Activated B cell treated with CpG ODN at 0.5 μM for 24 hours (primary cell): ENCODE measurements at regions of chr15 and their contacts with region 1.

Region 1: DNA sequence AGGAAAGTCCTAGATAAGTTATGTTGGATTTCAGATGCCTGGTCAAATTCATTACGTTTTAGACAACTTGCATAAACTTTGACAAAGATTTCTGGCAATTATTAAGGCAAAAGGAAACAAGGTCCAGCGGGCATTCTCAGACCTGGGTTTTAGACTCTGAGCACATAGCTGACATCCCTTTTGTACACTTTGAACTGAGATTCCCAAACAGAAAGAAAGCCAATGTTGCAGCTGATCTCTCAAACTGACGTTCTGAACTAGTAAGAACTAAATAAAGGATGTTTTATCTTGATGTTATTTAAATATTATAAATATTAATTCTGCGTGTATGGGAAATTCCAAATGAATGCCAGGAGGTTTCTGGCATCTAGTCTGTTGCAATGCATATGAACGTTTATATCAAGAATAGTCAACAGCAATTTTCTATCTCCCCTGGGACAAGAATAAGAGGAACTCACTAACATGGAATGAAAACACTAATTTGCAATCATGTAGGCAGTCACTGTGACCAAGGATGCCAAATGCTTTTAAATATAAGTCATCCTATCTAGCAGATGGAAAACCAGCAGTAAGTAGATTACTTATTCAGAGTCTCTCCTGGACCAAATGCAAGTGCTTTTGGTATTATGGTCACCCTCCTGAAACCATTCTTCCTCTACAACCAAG is 202.1 kb downstream of the GREM1 start:
- DNase-seq: no peak
- ATAC-seq: no peak
- H3K4me3 Mint-ChIP-seq: no peak overlapping the region
- H3K27ac Mint-ChIP-seq: no peak overlapping the region
- H3K4me1 Mint-ChIP-seq: peaks cover 21% of the 10 kb centered on the region
- H3K27me3 Mint-ChIP-seq: peaks cover 1% of the 10 kb centered on the region
- CTCF ChIP-seq: no peak

Region 2: DNA sequence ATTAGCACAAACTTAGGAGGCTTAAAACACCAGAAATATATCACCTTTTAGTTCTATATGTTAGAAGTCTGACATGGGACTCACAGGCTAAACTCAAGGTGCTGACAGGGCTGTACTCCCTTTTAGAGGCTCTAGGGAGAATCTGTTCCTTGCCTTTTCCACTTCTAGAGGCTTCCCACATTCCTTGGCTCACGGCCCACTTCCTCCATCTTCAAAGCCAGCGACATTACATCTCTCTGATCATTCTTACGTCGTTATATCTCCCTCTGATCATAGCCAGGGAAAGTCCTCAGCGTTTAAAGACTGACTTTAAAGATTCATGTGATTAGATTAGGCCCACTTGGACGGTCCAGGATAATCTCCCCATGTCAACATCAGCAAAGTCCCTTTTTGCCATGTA is 35.7 kb before region 1 on chr15:
- CTCF ChIA-PET with region 1: no interaction called
- POLR2A ChIA-PET with region 1: no interaction called
- intact Hi-C with region 1: loop called (anchors 5 kb)
- DNase-seq: no peak
- ATAC-seq: no peak
- H3K4me3 Mint-ChIP-seq: no peak overlapping the region
- H3K27ac Mint-ChIP-seq: no peak overlapping the region
- H3K4me1 Mint-ChIP-seq: no peaks in the 10 kb centered on the region
- H3K27me3 Mint-ChIP-seq: no peaks in the 10 kb centered on the region
- CTCF ChIP-seq: no peak

Region 3: GRCh38 chr15:33729653-33730052 is 809.8 kb after region 1 on chr15:
- CTCF ChIA-PET with region 1: no interaction called
- POLR2A ChIA-PET with region 1: no interaction called
- intact Hi-C with region 1: no loop called
- DNase-seq: no peak
- ATAC-seq: no peak
- H3K4me3 Mint-ChIP-seq: no peak overlapping the region
- H3K27ac Mint-ChIP-seq: no peak overlapping the region
- H3K4me1 Mint-ChIP-seq: no peaks in the 10 kb centered on the region
- H3K27me3 Mint-ChIP-seq: no peaks in the 10 kb centered on the region
- CTCF ChIP-seq: no peak